Left ventricle myocardium superior (tissue), 1 donor: ENCODE measurements at regions of chr13 and their contacts with region 1.

Region 1: DNA sequence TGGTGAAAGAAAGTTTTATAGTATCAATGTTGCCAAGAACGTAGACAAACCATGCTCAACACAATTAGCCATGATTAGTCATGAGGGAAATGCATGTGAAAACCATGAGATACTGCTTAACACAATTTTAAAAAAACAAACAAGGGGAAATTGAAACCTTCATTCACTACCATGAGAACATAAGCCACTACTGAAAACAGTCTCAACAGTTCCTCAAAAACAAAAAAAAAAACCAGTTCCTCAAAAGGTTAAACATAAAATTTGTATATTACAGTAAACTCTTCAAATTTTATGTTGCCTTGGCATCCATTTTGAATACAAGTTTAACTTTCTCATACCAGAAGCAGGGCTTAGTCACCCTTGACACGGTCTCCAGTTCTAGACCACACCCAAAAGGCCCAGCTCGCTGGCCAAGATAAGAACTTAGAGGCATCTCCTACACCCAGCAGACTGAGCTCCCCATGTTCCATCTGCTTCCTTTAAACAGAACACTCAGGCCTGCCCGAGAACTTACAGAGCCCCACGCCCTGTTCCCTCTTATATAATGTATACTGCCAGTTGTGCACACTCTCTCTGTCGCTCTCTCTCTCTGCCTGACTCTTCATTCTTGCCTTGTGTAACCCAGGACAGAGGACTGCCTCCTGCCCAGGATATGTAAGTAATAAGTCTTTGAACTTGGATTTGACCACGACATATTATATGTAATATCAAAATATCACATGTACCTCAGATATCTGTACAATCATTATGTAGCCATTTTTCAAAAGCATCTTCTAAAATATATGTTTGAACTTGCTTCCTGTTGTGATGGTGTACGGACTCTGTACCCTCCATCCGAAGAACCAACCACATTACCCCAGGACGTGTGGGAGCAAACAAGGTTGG is 67.4 kb downstream of the STK24 start:
- DNase-seq: peak; percentile 65
- ATAC-seq: peak; percentile 71

Region 2: DNA sequence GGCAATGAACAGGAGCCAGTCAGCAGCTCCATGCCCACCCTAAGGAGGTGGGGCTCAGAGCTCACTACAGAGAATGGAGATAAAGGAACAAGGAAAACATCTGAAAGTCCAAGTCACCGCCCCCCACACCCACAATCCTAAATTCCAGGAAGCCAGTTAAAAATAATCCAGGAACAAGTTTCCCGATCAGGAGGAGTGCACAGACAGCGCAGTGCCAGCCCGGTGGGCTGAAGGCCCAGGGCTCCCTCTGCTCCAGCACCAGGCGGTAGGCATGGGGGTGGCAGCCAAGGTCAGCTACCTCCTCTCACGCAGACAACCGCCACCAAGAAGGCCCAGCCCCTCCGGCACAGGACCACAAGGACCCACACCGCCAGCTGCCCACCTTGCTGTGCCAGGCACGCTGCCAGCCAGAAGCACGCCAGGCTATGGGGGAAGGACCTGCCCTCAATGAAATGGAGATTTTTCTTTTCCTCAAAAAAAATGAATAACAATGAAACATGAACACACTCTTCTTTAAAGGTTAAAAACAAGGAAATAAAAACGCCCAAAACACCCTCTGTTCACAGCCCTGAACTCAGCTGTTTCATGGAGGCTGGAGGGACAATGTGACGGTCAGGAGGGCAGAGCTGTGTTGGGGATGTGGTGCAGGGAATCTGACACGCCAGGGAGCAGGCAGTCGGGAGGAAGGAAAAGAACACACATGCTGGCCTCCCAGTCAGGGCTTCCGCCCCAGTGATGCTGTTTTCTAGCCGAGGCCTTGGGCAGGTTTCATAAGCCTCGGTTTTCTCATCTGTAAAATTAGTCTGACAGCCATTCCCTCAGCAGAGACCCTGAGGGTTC is 56.4 kb after region 1 on chr13:
- intact Hi-C with region 1: loop called (anchors 10 kb)
- DNase-seq: peak; percentile 68
- ATAC-seq: peak; percentile 90